ENCODE measurements at regions of chr1 and their contacts with region 1.

Region 1: DNA sequence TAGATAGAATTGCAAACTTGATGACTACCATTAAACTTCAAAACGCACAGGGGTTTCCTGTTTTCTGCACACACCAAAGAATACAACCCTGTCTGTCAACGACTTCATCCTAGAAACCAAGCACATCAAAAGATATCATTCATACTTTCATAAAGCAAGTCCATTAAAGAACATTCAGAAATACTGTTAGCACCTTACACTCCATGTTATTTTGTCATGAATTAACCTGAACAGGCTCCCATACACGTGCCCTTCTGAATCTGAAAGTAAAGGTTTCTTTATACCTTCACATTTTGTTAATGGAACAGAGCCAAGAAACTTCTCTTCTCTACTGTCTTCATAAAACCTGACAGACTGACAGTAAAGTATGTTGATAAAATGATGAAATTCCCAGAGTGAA is 46.1 kb downstream of the PUM1 start:
- DNase-seq: no peak

Region 2: GRCh38 chr1:30919025-30919881 is 100.1 kb before region 1 on chr1:
- intact Hi-C with region 1: no loop called
- DNase-seq: peak; percentile 17

Region 3: GRCh38 chr1:31054349-31054748 is 34.9 kb after region 1 on chr1:
- intact Hi-C with region 1: loop called in 1 of 2 experiments (anchors 5 kb)
- DNase-seq: no peak

Region 4: GRCh38 chr1:31155216-31155841 is 135.9 kb after region 1 on chr1:
- intact Hi-C with region 1: no loop called
- DNase-seq: peak; percentile 86

Measured in posterior vena cava (tissue), 2 donors.